ENCODE measurements at regions of chr12 and their contacts with region 1.

Region 1: DNA sequence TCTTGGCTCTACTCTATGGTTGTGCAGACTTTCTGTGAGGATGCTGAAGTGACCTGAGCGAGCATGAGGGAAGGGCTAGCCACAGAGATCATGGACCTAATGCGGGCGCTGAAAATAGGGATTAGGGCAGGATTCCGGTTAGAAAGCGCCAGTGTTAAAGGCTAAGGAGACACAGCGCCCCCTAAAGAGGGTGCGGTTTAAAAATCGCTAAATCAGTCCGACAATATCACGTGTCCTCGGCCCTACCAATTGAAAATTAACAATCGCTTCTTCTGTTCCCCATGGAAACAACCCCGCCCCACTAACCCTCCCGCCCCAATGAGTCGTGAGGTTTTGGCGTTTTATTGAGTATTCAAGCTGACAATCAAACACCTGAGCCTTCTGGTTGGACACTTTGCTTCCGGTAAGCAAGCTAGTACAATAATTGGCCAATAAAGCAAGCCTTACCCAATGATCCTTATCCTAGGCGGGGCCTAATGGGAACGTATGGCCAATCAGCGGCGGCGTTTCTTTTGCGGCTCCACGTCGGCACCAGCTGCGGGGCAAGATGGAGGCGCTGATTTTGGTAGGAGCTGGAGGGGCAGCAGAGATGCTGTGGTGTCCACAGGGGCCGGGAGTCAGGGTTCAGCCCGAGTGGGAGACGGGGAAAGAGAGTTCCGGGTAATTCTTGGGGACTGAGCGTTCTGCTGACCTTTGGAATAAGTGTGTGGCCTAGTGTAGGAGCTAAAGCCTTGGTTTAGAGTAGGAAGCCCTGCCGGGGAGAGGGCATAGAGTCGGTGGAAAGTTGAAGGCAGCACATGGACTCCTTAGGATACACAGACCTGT is at the start of gene COPZ1:
- DNase-seq: peak; percentile 94 to 95 (median 95)
- ATAC-seq: peak; percentile 98 to 99 (median 98)
- H3K4me3 ChIP-seq: peak within 1 kb of the TSS; percentile 51 to 85 (median 75)
- H3K27ac ChIP-seq: peak within 1 kb of the TSS; percentile 50 to 88 (median 83)
- H3K4me1 ChIP-seq: peaks cover 0 to 47% (median 30%) of the 10 kb centered on the region in 12 donors
- H3K27me3 ChIP-seq: no peaks in the 10 kb centered on the region
- CTCF ChIP-seq: peak; percentile 58 to 88 (median 82)
- POLR2A ChIP-seq: peak in 1 of 2 donors; percentile 50
- total RNA-seq, gene COPZ1: 112 to 146 (median 125) TPM

Region 2: DNA sequence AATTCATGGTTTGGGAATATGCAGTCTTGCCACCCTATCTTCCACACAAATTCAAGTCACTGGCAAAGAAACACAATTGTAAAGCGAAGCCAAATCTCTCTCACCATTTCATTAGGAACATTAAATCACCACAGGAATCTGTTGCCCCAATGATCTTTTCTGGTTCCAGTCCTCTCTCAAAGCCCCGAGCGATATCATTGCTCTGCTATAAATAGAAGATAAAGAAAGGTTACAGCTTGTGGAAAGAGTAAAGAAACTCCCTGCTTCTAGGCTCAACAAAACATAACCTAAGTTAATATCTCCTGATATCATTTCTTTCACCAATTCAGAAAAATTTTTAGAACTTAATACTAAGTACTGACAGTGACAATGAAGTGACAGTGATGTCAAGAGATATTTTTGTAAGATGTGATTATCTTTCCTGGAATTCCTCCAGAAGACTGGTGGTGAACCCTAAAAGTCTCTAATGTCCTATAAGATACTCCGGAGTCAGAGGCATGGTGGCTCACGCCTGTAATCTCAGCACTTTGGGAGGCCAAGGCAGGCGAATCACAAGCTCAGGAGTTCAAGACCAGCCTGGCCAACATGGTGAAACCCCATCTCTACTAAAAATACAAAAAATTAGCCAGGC is 78.7 kb before region 1 on chr12:
- intact Hi-C with region 1: loop called in 3 of 10 experiments (anchors 5 to 10 kb)
- DNase-seq: no peak
- ATAC-seq: peak in 3 of 4 donors; percentile 38 to 63 (median 63)
- H3K4me3 ChIP-seq: no peak overlapping the region
- H3K27ac ChIP-seq: peak overlapping the region; percentile 3 to 83 (median 74)
- H3K4me1 ChIP-seq: peaks cover 0 to 24% (median 9%) of the 10 kb centered on the region in 12 donors
- H3K27me3 ChIP-seq: no peaks in the 10 kb centered on the region
- CTCF ChIP-seq: no peak
- POLR2A ChIP-seq: no peak

Region 3: DNA sequence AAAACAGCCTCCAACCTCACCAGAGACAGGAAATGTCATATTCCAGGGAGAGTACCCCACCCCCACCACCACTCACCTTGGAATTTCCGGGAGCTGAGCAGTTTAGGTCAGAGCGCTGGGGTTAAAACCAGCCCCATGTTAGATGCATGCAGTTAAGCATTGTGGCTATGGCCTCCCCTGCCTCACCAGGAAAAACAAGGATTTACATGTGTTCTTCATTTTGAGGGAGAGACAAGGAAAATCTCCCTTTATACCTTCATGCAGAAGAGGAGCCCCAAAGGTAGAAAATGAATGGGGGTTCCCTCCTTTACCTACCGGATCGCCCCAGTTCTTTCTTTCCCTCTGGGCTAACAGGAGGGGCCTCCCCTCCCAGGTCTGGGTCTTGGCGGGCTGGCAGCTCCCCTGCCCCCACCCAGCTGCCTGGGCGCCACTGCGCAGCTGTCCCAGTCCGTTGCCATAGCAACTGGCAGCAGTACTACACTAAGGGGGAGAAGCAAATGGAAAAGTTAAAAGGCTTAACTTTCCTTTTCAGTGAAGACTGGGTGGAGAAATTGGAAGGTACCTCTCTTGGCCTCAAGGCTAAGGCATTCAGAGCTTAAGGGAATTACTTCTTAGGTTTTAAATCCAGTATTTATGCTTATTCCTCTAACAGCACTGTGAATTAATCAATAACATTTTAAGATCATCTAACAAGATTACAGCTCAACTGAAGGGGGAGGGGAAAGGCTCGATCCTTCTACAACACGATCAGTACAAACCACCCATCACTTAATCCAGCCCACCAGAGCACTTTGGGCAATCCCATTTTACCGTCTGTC is 65.4 kb before region 1 on chr12:
- intact Hi-C with region 1: loop called in 2 of 10 experiments (anchors 10 kb)
- DNase-seq: peak; percentile 79 to 85 (median 85)
- ATAC-seq: peak; percentile 86 to 95 (median 92)
- H3K4me3 ChIP-seq: peak overlapping the region; percentile 12 to 59 (median 51)
- H3K27ac ChIP-seq: peak overlapping the region; percentile 7 to 97 (median 81)
- H3K4me1 ChIP-seq: peaks cover 2 to 64% (median 48%) of the 10 kb centered on the region in 12 donors
- H3K27me3 ChIP-seq: no peaks in the 10 kb centered on the region
- CTCF ChIP-seq: no peak
- POLR2A ChIP-seq: no peak

Region 4: GRCh38 chr12:54359033-54359761 is 34.4 kb after region 1 on chr12:
- intact Hi-C with region 1: loop called in 3 of 10 experiments (anchors 1 to 2 kb)
- DNase-seq: peak; percentile 95 to 98 (median 97)
- ATAC-seq: peak; percentile 95 to 97 (median 97)
- H3K4me3 ChIP-seq: peak overlapping the region; percentile 24 to 86 (median 68)
- H3K27ac ChIP-seq: peak overlapping the region; percentile 53 to 96 (median 90)
- H3K4me1 ChIP-seq: peaks cover 0 to 43% (median 13%) of the 10 kb centered on the region in 12 donors
- H3K27me3 ChIP-seq: no peaks in the 10 kb centered on the region
- CTCF ChIP-seq: no peak
- POLR2A ChIP-seq: peak in 1 of 2 donors; percentile 56

Region 5: GRCh38 chr12:54708826-54709225 is 384.0 kb after region 1 on chr12:
- intact Hi-C with region 1: no loop called
- DNase-seq: no peak
- ATAC-seq: no peak
- H3K4me3 ChIP-seq: no peak overlapping the region
- H3K27ac ChIP-seq: no peak overlapping the region
- H3K4me1 ChIP-seq: no peaks in the 10 kb centered on the region
- H3K27me3 ChIP-seq: peaks cover 0 to 16% (median 4%) of the 10 kb centered on the region in 9 donors
- CTCF ChIP-seq: no peak
- POLR2A ChIP-seq: no peak